Heart right ventricle (tissue), 16 donors: ENCODE measurements at regions of chr22 and their contacts with region 1.

Region 1: GRCh38 chr22:20899827-20900423 is 17.3 kb upstream of the CRKL start:
- DNase-seq: no peak
- ATAC-seq: no peak
- H3K4me3 ChIP-seq: no peak overlapping the region
- H3K27ac ChIP-seq: no peak overlapping the region
- H3K4me1 ChIP-seq: peaks cover 0 to 9% (median 0%) of the 10 kb centered on the region in 9 donors
- H3K27me3 ChIP-seq: no peaks in the 10 kb centered on the region
- CTCF ChIP-seq: no peak

Region 2: DNA sequence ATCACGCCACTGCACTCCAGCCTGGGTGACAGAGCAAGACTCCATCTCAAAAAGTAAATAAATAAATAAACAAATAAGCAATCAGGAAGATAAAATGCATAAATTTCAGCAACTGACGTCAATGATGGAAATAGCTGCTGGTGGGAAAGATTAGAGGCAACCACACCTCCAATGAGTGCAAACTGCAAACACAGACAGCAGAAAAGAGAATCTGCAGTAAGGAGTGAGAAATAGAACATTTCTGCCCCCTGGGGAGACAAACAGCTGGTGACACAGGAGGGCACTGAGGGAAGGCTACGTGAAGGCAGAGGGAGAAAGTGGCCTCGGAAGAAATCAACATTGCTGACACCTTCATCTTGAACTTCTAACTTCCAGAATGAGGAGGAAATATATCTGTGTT is 47.8 kb before region 1 on chr22:
- intact Hi-C with region 1: loop called in 1 of 10 experiments (anchors 5 kb)
- DNase-seq: no peak
- ATAC-seq: no peak
- H3K4me3 ChIP-seq: no peak overlapping the region
- H3K27ac ChIP-seq: no peak overlapping the region
- H3K4me1 ChIP-seq: peaks cover 10 to 36% (median 21%) of the 10 kb centered on the region in 9 donors
- H3K27me3 ChIP-seq: no peaks in the 10 kb centered on the region
- CTCF ChIP-seq: no peak

Region 3: GRCh38 chr22:21074188-21074724 is 174.3 kb after region 1 on chr22:
- intact Hi-C with region 1: loop called in 1 of 10 experiments (anchors 10 kb)
- DNase-seq: no peak
- ATAC-seq: peak in 2 of 8 donors; percentile 14 to 77
- H3K4me3 ChIP-seq: no peak overlapping the region
- H3K27ac ChIP-seq: no peak overlapping the region
- H3K4me1 ChIP-seq: no peaks in the 10 kb centered on the region
- H3K27me3 ChIP-seq: peaks cover 0 to 5% (median 0%) of the 10 kb centered on the region in 7 donors
- CTCF ChIP-seq: no peak